ENCODE measurements at regions of chr1 and their contacts with region 1.

Region 1: GRCh38 chr1:235415008-235415904 is 48.0 kb downstream of the TBCE start:
- DNase-seq: peak; percentile 39 to 89
- H3K4me3 ChIP-seq: no peak overlapping the region
- CTCF ChIP-seq: peak in 1 of 3 donors; percentile 32
- POLR2A ChIP-seq: no peak

Region 2: DNA sequence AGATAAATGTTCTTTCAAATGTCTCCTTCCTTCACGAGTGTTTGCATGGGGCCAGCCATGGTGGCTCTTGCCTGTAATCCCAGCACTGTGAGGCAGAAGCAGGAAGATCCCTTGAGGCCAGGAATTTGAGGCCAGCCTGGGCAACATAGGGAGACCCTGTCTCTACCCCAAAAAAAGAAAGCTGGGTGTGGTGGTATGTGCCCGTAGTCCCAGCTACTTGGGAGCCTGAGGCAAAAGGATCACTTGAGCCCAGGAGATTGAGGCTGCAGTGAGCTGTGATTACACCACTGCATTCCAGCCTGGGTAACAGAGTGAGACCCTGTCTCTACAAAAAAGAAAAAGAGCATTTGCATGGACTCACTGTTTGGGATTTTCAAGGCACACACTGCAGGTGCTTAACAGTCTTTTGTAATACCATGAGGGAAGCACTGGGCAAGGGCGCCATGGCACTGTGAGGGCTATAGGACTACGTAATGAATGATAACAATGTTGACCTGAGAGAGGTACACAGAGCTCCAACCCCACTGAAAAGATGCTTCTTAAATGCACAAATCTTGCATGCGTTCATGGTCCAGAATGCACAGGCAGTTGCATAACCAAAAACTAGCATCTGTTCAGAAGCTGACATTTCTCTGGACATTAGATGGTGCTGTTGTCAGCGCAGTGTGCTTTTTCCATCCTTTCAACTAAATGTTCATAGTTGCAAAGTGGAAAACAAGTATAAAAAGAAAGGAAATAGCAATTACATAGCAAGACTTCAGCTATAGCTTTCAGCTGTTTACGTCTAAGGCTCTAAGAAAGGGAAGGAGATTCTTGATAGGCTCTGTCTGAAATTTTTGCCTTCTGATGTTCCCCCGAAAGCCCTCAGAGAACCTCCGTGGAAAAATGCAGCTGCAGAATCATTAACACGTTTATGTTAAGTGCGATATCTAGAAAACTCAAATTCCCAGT is 928.5 kb before region 1 on chr1:
- intact Hi-C with region 1: loop called (anchors 10 kb)
- DNase-seq: no peak
- H3K4me3 ChIP-seq: no peak overlapping the region
- CTCF ChIP-seq: no peak
- POLR2A ChIP-seq: no peak

Region 3: GRCh38 chr1:235105051-235106043 is 309.9 kb before region 1 on chr1:
- intact Hi-C with region 1: loop called (anchors 10 kb)
- DNase-seq: no peak
- H3K4me3 ChIP-seq: no peak overlapping the region
- CTCF ChIP-seq: no peak
- POLR2A ChIP-seq: no peak

Region 4: DNA sequence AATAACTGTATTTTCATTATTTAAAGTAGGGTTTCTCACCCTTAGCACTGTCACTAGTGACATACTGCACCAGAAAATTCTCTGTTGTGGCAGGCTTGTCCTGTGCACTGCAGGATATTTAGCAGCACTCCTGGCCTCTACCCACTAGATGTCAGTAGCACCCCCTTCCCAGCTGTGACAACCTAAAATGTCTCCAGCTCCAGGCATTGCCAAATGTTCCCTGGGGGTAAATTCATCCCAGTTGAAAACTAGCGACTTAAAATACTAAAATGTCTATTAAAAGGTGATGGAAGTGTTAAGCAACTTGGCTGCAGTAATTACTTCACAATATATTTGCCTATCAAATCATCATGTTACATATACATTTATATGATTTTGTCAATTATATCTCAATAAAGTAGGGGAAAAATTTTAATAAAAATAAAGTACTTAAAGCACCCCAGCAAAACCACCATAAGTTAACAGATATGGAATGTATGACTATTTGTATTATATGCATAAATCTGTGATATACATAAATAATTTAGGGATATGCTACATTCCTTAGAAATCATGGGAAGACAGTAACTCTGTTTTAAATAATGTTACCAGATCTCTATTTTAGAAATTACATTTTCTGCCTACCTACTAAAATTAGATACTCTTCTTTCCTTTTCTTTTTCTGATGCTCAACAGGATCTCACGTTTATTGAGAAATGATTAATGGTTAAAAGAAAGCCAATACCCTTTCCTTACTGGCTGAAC is 161.9 kb before region 1 on chr1:
- intact Hi-C with region 1: loop called (anchors 5 kb)
- DNase-seq: peak in 1 of 2 donors; percentile 49
- H3K4me3 ChIP-seq: no peak overlapping the region
- CTCF ChIP-seq: no peak
- POLR2A ChIP-seq: no peak

Region 5: GRCh38 chr1:235923466-235924021 is 508.3 kb after region 1 on chr1:
- intact Hi-C with region 1: no loop called
- DNase-seq: no peak
- H3K4me3 ChIP-seq: no peak overlapping the region
- CTCF ChIP-seq: no peak
- POLR2A ChIP-seq: no peak

Measured in lower leg skin (tissue), 4 donors.